Lower leg skin (tissue), 4 donors: ENCODE measurements at regions of chr1 and their contacts with region 1.

Region 1: DNA sequence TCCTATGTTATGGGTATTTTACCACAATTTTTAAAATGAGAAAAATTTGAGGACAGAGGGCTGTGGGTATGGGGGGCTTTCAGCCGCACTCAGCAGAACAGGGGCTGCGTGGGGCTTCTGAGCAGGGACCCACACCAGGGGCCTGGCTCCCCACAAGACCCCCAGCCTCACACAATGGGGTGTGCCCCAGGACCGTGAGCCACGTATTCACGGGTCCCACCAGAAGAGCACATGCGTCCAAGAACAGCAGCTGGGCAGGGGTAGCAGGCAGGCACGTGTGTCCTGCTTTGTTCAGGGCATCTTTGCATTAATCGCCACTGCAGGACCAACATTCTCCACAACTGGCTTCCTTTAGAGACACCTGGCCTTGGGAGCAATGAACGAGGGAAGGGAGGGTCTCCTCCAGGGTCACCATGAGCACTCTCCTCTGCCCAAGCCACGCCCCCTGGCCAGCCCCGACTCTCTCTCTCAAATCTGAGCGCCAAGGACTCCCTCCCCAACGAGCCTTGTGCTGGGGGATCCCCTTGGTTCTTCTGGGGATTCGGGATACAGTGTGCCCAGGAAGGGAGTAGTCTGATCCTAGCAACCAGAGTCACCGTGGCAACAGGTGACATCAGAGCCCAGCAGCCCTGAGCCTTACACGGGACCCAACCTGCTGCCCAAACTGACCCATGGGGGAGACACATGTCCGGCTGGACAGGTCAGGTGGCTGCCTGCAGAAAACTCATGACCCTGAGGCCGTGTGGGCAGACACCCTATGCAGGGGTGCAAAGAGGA is 7.4 kb upstream of the ARF1 start:
- DNase-seq: peak in 1 of 2 donors; percentile 75
- H3K4me3 ChIP-seq: no peak overlapping the region
- CTCF ChIP-seq: no peak
- POLR2A ChIP-seq: no peak

Region 2: GRCh38 chr1:227778401-227778947 is 296.7 kb before region 1 on chr1:
- intact Hi-C with region 1: loop called (anchors 5 kb)
- DNase-seq: peak in 1 of 2 donors; percentile 58
- H3K4me3 ChIP-seq: no peak overlapping the region
- CTCF ChIP-seq: no peak
- POLR2A ChIP-seq: no peak